Activated naive CD4-positive, alpha-beta T cell treated with anti-CD3 and anti-CD28 coated beads, Interleukin-2, amount 10 ng/mL, durations not matched to agents 7 days and 5 days (primary cell): ENCODE measurements at regions of chr7 and their contacts with region 1.

Region 1: GRCh38 chr7:74206589-74207120 is 3.2 kb upstream of the LAT2 start:
- DNase-seq: peak; percentile 86
- H3K4me3 Mint-ChIP-seq: no peak overlapping the region
- H3K27ac Mint-ChIP-seq: peak overlapping the region; percentile 62
- H3K4me1 Mint-ChIP-seq: peaks cover 40% of the 10 kb centered on the region
- H3K27me3 Mint-ChIP-seq: peaks cover 23% of the 10 kb centered on the region

Region 2: DNA sequence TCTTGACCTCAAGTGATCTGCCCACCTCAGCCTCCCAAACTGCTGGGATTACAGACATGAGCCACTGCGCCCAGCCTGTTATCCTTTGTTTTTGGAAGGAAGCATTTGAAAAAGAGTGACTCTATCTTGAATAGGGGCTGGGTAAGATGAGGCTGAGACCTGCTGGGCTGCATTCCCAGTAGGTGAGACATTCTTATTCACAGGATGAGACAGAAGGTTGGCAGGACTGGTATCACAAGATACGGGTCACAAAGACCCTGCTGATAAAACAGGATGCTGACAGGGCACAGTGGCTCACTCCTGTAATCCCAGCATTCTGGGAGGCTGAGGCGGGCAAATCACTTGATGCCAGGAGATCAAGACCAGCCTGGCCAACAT is 73.0 kb before region 1 on chr7:
- CTCF ChIA-PET with region 1: no interaction called
- DNase-seq: no peak
- H3K4me3 Mint-ChIP-seq: no peak overlapping the region
- H3K27ac Mint-ChIP-seq: no peak overlapping the region
- H3K4me1 Mint-ChIP-seq: peaks cover 4% of the 10 kb centered on the region
- H3K27me3 Mint-ChIP-seq: peaks cover 15% of the 10 kb centered on the region

Region 3: GRCh38 chr7:74173866-74174605 is 32.6 kb before region 1 on chr7 and contains the start of gene EIF4H:
- CTCF ChIA-PET with region 1: interaction called, 11 read pairs
- DNase-seq: peak; percentile 95
- H3K4me3 Mint-ChIP-seq: peak within 1 kb of the TSS; percentile 84
- H3K27ac Mint-ChIP-seq: peak within 1 kb of the TSS; percentile 89
- H3K4me1 Mint-ChIP-seq: peaks cover 49% of the 10 kb centered on the region
- H3K27me3 Mint-ChIP-seq: no peaks in the 10 kb centered on the region

Region 4: DNA sequence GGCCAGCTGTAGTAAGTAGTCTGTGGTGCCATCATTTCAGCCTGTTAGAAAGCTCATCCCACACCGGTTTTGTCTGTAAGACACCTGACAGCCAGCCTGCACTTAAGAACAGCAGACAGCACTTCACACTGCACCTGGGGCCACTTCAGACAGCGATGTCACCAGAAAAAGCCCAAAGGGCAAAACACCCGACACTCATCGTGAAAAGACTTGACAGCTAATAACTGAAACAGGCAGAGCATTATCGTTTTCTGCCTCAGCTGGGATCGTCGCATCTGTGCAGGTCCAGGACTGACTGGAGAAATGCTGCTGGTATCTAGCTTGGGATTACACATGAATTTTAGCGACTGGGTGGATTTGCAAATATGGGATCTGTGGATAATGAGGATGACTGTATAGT is 13.6 kb before region 1 on chr7:
- CTCF ChIA-PET with region 1: interaction called, 20 read pairs
- DNase-seq: no peak
- H3K4me3 Mint-ChIP-seq: no peak overlapping the region
- H3K27ac Mint-ChIP-seq: no peak overlapping the region
- H3K4me1 Mint-ChIP-seq: peaks cover 12% of the 10 kb centered on the region
- H3K27me3 Mint-ChIP-seq: no peaks in the 10 kb centered on the region

Region 5: GRCh38 chr7:74395745-74396311 is 189.2 kb after region 1 on chr7:
- CTCF ChIA-PET with region 1: interaction called, 145 read pairs
- DNase-seq: no peak
- H3K4me3 Mint-ChIP-seq: no peak overlapping the region
- H3K27ac Mint-ChIP-seq: no peak overlapping the region
- H3K4me1 Mint-ChIP-seq: no peaks in the 10 kb centered on the region
- H3K27me3 Mint-ChIP-seq: peaks cover 4% of the 10 kb centered on the region